GM12878 (cell line): ENCODE measurements at regions of chr16 and their contacts with region 1.

Region 1: DNA sequence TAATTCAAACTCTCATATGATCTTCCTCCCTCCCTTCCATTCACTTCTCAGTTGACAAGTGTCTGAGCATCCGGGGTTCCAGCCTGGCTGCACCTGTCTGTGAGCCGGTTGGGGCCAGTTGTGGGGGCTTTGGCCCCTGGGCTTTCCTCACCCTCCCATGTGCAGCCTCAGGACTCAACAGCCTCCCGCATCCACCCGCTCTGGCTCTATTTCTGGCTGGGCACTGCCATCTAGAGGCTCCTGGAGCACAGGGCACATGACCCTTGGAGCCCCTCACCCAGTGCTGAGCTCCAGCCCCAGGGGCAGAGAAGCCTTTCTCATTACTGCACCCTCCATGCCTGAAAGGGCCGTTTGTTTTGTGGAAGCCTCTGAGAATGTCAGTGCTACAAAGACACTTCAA is 43.3 kb downstream of the HAPSTR1 start:
- DNase-seq: no peak
- ATAC-seq: peak; percentile 83
- H3K4me3 ChIP-seq: no peak overlapping the region
- H3K27ac ChIP-seq: no peak overlapping the region
- H3K4me1 ChIP-seq: peaks cover 34% of the 10 kb centered on the region
- H3K27me3 ChIP-seq: no peaks in the 10 kb centered on the region
- CTCF ChIP-seq: peak; percentile 82 to 92 (median 84)
- EP300 ChIP-seq: no peak
- POLR2A ChIP-seq: no peak
- RAD21 ChIP-seq: peak; percentile 93

Region 2: GRCh38 chr16:8660841-8661301 is 473.9 kb before region 1 on chr16:
- CTCF ChIA-PET with region 1: interaction called, 24 read pairs
- POLR2A ChIA-PET with region 1: no interaction called
- RAD21 ChIA-PET with region 1: interaction called, 18 read pairs
- SMC1A ChIA-PET with region 1: interaction called, 13 read pairs
- in situ Hi-C with region 1: no loop called
- intact Hi-C with region 1: loop called (anchors 2 kb)
- DNase-seq: no peak
- ATAC-seq: peak; percentile 86
- H3K4me3 ChIP-seq: no peak overlapping the region
- H3K27ac ChIP-seq: no peak overlapping the region
- H3K4me1 ChIP-seq: peaks cover under 1% of the 10 kb centered on the region; the same call in 1 of the 2 replicates
- H3K27me3 ChIP-seq: no peaks in the 10 kb centered on the region
- CTCF ChIP-seq: peak; percentile 42 to 69 (median 59)
- EP300 ChIP-seq: no peak
- POLR2A ChIP-seq: no peak
- RAD21 ChIP-seq: peak; percentile 75

Region 3: DNA sequence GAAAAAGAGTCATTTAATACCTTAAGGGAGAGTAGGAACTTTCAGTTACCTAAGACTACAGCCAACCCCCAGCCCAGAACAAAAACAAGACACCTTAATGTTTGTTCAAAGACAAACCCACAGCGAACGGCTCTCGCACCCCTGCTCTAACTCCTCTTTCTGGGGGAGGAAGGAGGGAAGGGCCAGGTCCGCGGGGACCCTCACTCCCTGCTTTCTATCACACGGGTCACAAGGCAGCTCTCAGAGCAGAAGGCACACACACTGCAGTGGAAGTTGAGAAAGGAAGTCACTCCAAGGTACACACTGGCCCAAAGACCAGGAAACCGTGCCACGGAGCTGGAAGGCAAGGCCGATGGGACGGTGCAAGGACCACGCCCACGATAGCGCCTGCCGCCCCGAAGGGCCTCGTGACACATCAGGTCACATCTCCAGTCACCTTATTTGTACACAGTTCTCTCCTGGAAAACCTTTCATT is 242.6 kb before region 1 on chr16:
- CTCF ChIA-PET with region 1: interaction called, 35 read pairs
- POLR2A ChIA-PET with region 1: interaction called, 4 read pairs
- RAD21 ChIA-PET with region 1: interaction called, 30 read pairs
- SMC1A ChIA-PET with region 1: interaction called, 28 read pairs
- in situ Hi-C with region 1: loop called (anchors 5 kb)
- intact Hi-C with region 1: loop called (anchors 1 kb)
- DNase-seq: peak; percentile 42
- ATAC-seq: peak; percentile 59
- H3K4me3 ChIP-seq: peak overlapping the region; percentile 59
- H3K27ac ChIP-seq: peak overlapping the region; percentile 95
- H3K4me1 ChIP-seq: peaks cover 49% of the 10 kb centered on the region
- H3K27me3 ChIP-seq: no peaks in the 10 kb centered on the region
- CTCF ChIP-seq: no peak
- EP300 ChIP-seq: no peak
- POLR2A ChIP-seq: no peak; the same call in 1 of the 2 replicates
- RAD21 ChIP-seq: no peak

Region 4: DNA sequence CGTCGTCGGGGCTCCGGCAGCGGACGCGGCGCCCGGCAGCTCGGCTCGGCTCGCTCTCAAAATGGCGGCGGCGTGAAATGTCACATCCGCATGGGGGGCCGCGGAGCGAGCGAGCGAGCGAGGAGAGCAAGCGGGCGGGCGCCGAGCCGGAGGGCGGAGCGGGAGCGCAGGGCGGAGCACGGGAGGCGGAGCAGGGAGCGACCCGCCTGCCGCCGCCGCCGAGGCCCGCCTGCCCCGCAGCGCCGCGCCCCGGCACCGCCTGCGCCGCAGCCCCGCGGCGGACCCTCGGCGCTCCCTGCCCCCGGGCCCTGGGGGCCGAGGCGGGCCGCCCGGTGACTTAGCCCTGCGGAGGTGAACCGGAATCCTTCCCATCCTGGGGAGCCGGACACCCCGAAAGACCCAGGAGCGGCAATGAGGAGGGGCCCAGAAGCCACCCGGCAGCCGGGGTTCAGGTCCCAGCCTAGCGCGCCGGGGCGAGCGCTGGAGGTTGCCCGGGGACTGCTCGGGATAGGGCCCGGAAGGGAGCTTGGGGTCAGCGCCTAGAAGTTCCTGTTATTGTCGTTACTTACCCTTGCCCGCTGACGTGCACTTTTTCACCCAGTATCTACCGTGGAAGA is 170.8 kb before region 1 on chr16 and contains the start of gene USP7:
- CTCF ChIA-PET with region 1: interaction called, 8 read pairs
- POLR2A ChIA-PET with region 1: no interaction called
- RAD21 ChIA-PET with region 1: no interaction called
- SMC1A ChIA-PET with region 1: no interaction called
- in situ Hi-C with region 1: no loop called
- intact Hi-C with region 1: loop called (anchors 5 kb)
- DNase-seq: no peak
- ATAC-seq: peak; percentile 86
- H3K4me3 ChIP-seq: peak within 1 kb of the TSS; percentile 80
- H3K27ac ChIP-seq: peak within 1 kb of the TSS; percentile 85
- H3K4me1 ChIP-seq: peaks cover 8% of the 10 kb centered on the region
- H3K27me3 ChIP-seq: no peaks in the 10 kb centered on the region
- CTCF ChIP-seq: peak in 1 of 3 experiments; percentile 13; a peak in 1 of 6 replicates
- EP300 ChIP-seq: no peak
- POLR2A ChIP-seq: peak; percentile 89
- RAD21 ChIP-seq: no peak
- polyA plus RNA-seq, gene USP7: 20.8 to 25.0 TPM

Region 5: DNA sequence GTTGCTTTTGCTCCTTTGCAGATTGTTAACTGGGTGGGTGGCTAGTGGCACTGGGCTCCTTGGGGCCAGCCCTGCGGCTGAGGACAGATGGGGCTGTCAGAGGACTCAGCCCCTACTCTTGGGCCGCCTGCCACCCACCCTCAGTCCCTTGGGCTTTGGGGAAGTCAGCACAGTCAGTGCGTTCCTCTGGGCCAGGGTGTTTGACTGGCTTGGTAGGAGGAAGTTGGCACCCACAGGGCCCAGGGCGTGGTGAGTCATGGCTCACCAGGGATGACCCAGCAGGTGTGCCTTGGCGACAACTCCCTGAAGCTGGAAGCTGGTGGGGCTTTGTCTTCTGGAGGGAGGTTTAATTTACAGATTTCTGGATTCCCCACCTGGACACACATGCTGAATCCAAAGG is 10.9 kb before region 1 on chr16:
- CTCF ChIA-PET with region 1: interaction called, 15 read pairs
- POLR2A ChIA-PET with region 1: interaction called, 3 read pairs
- RAD21 ChIA-PET with region 1: interaction called, 4 read pairs
- SMC1A ChIA-PET with region 1: interaction called, 3 read pairs
- in situ Hi-C with region 1: no loop called
- intact Hi-C with region 1: no loop called
- DNase-seq: no peak
- ATAC-seq: peak; percentile 54
- H3K4me3 ChIP-seq: no peak overlapping the region
- H3K27ac ChIP-seq: no peak overlapping the region
- H3K4me1 ChIP-seq: peaks cover 32% of the 10 kb centered on the region
- H3K27me3 ChIP-seq: no peaks in the 10 kb centered on the region
- CTCF ChIP-seq: no peak
- EP300 ChIP-seq: no peak
- POLR2A ChIP-seq: no peak
- RAD21 ChIP-seq: no peak

Region 6: GRCh38 chr16:9258423-9259051 is 123.8 kb after region 1 on chr16:
- CTCF ChIA-PET with region 1: interaction called, 16 read pairs
- POLR2A ChIA-PET with region 1: no interaction called
- RAD21 ChIA-PET with region 1: interaction called, 3 read pairs
- SMC1A ChIA-PET with region 1: interaction called, 3 read pairs
- in situ Hi-C with region 1: no loop called
- intact Hi-C with region 1: no loop called
- DNase-seq: no peak
- ATAC-seq: peak; percentile 95
- H3K4me3 ChIP-seq: no peak overlapping the region
- H3K27ac ChIP-seq: no peak overlapping the region
- H3K4me1 ChIP-seq: no peaks in the 10 kb centered on the region
- H3K27me3 ChIP-seq: no peaks in the 10 kb centered on the region; a peak in 1 of 4 replicates
- CTCF ChIP-seq: peak; percentile 69 to 76 (median 71)
- EP300 ChIP-seq: no peak
- POLR2A ChIP-seq: no peak
- RAD21 ChIP-seq: peak; percentile 57

Region 7: GRCh38 chr16:9465161-9465560 is 330.4 kb after region 1 on chr16:
- CTCF ChIA-PET with region 1: no interaction called
- POLR2A ChIA-PET with region 1: no interaction called
- RAD21 ChIA-PET with region 1: no interaction called
- SMC1A ChIA-PET with region 1: no interaction called
- in situ Hi-C with region 1: no loop called
- intact Hi-C with region 1: no loop called
- DNase-seq: no peak
- ATAC-seq: no peak
- H3K4me3 ChIP-seq: no peak overlapping the region
- H3K27ac ChIP-seq: no peak overlapping the region
- H3K4me1 ChIP-seq: no peaks in the 10 kb centered on the region
- H3K27me3 ChIP-seq: no peaks in the 10 kb centered on the region
- CTCF ChIP-seq: no peak
- EP300 ChIP-seq: no peak
- POLR2A ChIP-seq: no peak
- RAD21 ChIP-seq: no peak